CD8-positive, alpha-beta memory T cell (primary cell): ENCODE measurements at regions of chr6 and their contacts with region 1.

Region 1: DNA sequence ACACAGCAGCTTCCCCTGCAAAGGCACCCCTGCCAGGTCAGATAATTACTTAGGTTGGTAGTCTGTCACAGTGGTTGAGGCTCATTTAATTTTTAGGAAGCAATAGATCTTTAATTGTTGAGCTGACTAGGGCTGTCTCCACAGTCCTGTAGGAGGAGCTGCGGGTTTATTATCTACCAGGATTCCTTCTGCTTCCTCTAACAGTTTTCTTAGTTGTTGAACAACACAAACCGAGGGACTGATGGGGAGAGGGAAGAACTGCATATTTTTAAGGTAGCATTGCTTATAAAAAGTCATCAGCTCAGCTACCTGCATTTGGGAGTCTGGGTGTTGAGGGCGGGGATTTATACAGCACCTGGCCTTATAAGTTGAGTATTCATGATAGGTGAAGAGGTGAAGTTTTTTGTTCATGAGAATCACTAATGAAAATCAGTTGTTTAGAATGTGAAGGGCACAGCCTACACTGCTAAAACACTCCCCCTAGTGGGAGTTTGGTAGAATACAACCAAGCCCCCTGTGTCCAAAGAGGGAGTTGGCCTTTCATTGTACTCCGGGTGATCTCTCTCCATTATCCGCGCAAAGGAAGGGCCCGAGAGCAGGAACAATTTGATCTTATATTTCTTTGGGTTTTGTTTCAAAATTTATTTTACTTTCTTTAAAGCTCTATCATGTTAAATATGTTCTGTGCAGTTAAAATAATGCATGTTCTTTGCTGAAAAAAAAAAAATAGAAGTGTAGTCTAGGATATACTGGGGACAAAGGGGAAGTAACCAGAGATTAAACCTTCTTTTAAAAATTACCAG is 69.6 kb downstream of the SSR1 start:
- DNase-seq: peak in 3 of 5 donors; percentile 26 to 62 (median 52)
- H3K4me3 ChIP-seq: no peak overlapping the region
- H3K4me3 Mint-ChIP-seq: no peak overlapping the region
- H3K27ac ChIP-seq: no peak overlapping the region
- H3K27ac Mint-ChIP-seq: peak overlapping the region; percentile 2 to 74 (median 19)
- H3K4me1 ChIP-seq: peaks cover 8% of the 10 kb centered on the region
- H3K4me1 Mint-ChIP-seq: peaks cover 10 to 14% (median 10%) of the 10 kb centered on the region in 3 donors
- H3K27me3 ChIP-seq: no peaks in the 10 kb centered on the region
- H3K27me3 Mint-ChIP-seq: peaks cover 0 to 2% of the 10 kb centered on the region in 2 donors

Region 2: DNA sequence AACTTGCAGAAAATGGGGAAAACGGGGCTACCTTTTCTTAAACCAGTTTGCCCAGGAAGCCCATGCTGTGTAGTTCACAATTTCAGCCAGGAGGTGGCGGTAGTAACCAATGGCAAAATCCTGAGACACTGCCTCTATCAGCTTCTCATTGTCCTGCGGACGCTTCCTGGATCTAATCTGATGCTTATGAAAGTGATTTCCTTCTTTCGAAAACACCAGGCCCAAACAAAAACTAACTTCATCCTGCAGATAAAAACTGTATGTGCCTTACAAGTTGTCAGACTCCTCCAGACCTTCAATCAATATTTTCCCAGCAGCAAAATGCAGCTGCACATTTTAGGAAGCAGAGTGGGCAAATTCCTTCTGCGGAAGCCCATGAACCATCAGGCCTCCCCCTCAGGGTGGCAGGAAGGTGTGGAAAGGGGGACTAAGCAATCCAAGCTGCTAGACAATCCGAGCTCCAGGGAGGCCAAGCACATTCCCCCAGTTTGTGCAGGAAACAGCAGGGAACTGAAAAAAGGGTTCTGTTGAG is 566.4 kb before region 1 on chr6:
- CTCF ChIA-PET with region 1: interaction called, 21 read pairs
- POLR2A ChIA-PET with region 1: interaction called, 3 read pairs
- DNase-seq: peak; percentile 59 to 80 (median 66)
- H3K4me3 ChIP-seq: peak overlapping the region; percentile 16
- H3K4me3 Mint-ChIP-seq: peak overlapping the region in 1 of 7 donors; percentile 0
- H3K27ac ChIP-seq: no peak overlapping the region
- H3K27ac Mint-ChIP-seq: peak overlapping the region in 3 of 8 donors; percentile 28 to 57 (median 29)
- H3K4me1 ChIP-seq: peaks cover 9% of the 10 kb centered on the region
- H3K4me1 Mint-ChIP-seq: peaks cover 13 to 24% (median 14%) of the 10 kb centered on the region in 3 donors
- H3K27me3 ChIP-seq: no peaks in the 10 kb centered on the region
- H3K27me3 Mint-ChIP-seq: peaks cover 2 to 7% of the 10 kb centered on the region in 2 donors

Region 3: DNA sequence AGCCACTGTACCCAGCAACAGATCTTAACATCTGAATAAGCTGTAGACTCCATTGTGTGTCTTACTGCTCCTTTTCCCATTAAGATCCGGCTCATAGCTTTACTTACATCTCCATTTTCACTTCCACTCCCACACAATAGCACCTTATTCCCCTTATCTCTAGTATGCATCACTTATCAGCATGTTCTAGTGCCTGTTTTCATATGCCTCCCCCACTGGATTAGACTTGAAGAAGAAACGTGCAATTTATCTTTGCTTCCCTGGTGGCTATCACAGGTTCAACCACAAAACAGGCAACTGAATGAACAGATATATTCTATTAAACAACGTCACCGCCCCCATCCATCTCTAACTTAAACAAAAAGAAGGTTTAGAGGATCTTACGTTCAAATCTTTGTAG is 57.5 kb after region 1 on chr6:
- CTCF ChIA-PET with region 1: no interaction called
- POLR2A ChIA-PET with region 1: no interaction called
- DNase-seq: no peak
- H3K4me3 ChIP-seq: no peak overlapping the region
- H3K4me3 Mint-ChIP-seq: no peak overlapping the region
- H3K27ac ChIP-seq: no peak overlapping the region
- H3K27ac Mint-ChIP-seq: peak overlapping the region in 3 of 8 donors; percentile 6 to 78 (median 54)
- H3K4me1 ChIP-seq: peaks cover 9% of the 10 kb centered on the region
- H3K4me1 Mint-ChIP-seq: peaks cover 31 to 55% (median 55%) of the 10 kb centered on the region in 3 donors
- H3K27me3 ChIP-seq: no peaks in the 10 kb centered on the region
- H3K27me3 Mint-ChIP-seq: no peaks in the 10 kb centered on the region

Region 4: DNA sequence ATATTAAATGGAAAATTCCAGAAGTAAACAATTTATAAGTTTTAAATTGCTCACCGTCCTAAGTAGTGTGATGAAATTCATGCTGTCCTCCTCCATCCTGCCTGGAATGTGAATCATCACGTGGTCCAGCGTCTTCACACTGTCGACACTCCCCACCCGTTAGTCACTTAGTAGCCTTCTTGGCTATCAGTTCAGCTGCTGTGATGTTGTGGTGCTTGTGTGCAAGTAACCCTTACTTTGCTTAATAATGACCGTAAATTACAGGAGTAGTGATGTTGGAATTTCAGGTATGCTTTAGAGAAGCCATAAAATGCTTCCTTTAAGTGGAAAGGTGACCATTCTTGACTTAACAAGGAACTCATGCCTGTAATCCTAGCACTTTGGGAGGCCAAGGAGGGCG is 171.4 kb after region 1 on chr6:
- CTCF ChIA-PET with region 1: no interaction called
- POLR2A ChIA-PET with region 1: no interaction called
- DNase-seq: no peak
- H3K4me3 ChIP-seq: no peak overlapping the region
- H3K4me3 Mint-ChIP-seq: no peak overlapping the region
- H3K27ac ChIP-seq: no peak overlapping the region
- H3K27ac Mint-ChIP-seq: no peak overlapping the region
- H3K4me1 ChIP-seq: no peaks in the 10 kb centered on the region
- H3K4me1 Mint-ChIP-seq: no peaks in the 10 kb centered on the region
- H3K27me3 ChIP-seq: no peaks in the 10 kb centered on the region
- H3K27me3 Mint-ChIP-seq: no peaks in the 10 kb centered on the region